ENCODE measurements at regions of chr2 and their contacts with region 1.

Region 1: DNA sequence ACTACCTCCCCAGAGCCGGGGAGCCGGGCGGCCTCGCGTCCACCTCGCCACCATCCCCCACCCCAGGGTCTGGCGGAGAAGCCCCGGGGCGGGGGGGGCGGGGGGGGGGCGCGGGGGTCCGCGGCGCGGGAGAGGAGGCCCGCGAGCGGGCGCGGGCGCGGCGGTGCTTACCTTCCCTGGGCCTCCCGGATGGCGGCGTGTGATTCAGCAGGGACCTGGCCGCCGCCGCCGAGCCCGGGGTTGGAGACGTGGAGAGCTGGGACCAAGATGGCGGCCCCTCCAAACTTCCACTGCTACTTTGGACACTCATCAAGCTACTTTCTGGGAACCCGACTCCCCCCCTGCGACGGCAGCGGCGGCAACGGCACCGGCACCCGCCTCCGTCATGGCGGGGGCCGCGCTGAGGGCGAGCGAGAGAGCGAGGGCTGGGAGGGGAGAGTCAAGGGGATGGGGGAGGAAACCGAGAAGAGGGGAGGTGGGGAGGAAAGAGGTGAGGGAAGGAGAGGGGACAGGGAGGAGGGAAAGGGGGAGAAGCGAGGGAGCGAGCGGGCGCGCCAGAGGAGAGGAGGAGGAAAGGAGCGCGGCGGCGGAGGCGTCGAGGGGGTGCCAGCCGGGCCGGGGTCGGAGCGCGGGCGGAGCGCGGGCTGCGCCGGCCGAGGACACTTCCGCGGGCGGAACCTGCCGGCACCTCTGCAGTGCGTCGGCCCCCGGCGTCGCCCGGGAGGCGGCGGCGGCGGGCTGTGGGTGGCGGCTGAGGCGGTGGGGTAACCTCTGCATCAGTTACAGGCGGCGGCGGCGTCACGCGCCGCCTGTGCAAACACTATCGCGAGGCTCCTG is at the start of gene TLK1:
- DNase-seq: peak; percentile 81
- H3K4me3 Mint-ChIP-seq: peak within 1 kb of the TSS; percentile 92
- H3K27ac Mint-ChIP-seq: peak within 1 kb of the TSS; percentile 88
- H3K4me1 Mint-ChIP-seq: peaks cover 56% of the 10 kb centered on the region
- H3K27me3 Mint-ChIP-seq: no peaks in the 10 kb centered on the region
- total RNA-seq, gene TLK1: 59.2 to 64.5 TPM

Region 2: DNA sequence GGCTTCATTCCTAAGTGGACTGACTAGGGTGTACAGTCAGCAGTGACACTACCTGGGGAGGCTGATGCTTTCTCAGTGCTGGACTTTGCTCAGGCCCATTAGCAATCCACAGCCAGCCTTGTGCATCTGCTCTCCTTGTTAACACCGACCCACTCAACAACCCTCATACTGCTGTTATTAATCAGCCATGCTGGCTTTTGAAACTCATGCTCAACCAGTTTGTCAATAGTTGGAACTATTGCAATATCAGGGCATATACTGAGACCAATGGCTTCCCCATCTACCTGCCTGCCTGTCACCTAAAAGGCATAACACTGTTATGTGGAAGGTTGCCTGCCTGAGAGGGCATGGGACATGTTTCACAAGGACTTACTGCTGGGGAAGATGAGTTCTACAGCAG is 304.3 kb before region 1 on chr2:
- CTCF ChIA-PET with region 1: no interaction called
- POLR2A ChIA-PET with region 1: no interaction called
- intact Hi-C with region 1: no loop called
- DNase-seq: no peak
- H3K4me3 Mint-ChIP-seq: no peak overlapping the region
- H3K27ac Mint-ChIP-seq: no peak overlapping the region
- H3K4me1 Mint-ChIP-seq: no peaks in the 10 kb centered on the region
- H3K27me3 Mint-ChIP-seq: peaks cover 3% of the 10 kb centered on the region

Region 3: DNA sequence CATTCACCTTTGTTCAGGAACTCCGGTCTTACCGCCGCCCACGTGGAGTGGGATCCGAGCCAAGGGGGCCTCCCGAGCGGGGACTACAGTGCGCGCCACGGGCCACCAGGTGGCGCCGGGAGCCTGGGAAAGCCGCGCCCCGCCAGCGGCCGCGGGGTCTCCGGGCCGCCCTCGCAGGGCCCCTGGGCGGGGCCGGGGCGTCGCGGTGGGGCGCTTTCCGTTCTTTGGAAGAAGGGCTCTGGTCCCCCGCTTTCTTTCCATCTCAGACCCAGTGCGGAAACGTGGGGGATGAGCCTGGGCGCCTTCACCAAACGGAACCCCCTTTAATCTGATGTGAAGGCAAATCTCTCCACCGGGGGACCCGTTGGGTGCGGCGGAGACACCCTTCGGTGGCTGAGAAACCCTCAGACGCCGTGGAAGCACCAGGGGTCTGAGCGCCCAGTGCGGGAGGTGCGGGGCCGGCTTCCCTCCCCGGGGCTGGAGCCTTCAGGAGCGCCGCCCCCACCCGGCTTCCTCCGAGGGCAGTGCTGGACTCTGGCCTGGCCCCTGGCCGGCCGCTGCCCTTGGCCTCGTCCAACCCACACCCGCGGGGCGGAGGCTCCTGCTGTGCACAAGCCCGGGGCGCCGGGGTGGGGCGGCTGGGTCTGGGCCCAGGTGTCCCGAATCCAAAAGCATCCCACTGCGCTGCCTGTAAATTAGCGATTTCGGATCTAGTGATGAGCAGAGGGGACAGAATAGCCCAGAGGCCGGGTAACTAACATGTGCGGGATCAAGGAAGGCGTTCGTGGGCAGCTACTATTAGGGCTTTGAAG is 186.6 kb before region 1 on chr2:
- CTCF ChIA-PET with region 1: interaction called, 23 read pairs
- POLR2A ChIA-PET with region 1: no interaction called
- intact Hi-C with region 1: loop called (anchors 1 kb)
- DNase-seq: peak; percentile 91
- H3K4me3 Mint-ChIP-seq: peak overlapping the region; percentile 72
- H3K27ac Mint-ChIP-seq: peak overlapping the region; percentile 42
- H3K4me1 Mint-ChIP-seq: peaks cover 14% of the 10 kb centered on the region
- H3K27me3 Mint-ChIP-seq: no peaks in the 10 kb centered on the region

Region 4: GRCh38 chr2:171095014-171095582 is 65.2 kb before region 1 on chr2:
- CTCF ChIA-PET with region 1: interaction called, 4 read pairs
- POLR2A ChIA-PET with region 1: no interaction called
- intact Hi-C with region 1: loop called (anchors 2 kb)
- DNase-seq: no peak
- H3K4me3 Mint-ChIP-seq: no peak overlapping the region
- H3K27ac Mint-ChIP-seq: peak overlapping the region; percentile 24
- H3K4me1 Mint-ChIP-seq: peaks cover 37% of the 10 kb centered on the region
- H3K27me3 Mint-ChIP-seq: no peaks in the 10 kb centered on the region

Region 5: DNA sequence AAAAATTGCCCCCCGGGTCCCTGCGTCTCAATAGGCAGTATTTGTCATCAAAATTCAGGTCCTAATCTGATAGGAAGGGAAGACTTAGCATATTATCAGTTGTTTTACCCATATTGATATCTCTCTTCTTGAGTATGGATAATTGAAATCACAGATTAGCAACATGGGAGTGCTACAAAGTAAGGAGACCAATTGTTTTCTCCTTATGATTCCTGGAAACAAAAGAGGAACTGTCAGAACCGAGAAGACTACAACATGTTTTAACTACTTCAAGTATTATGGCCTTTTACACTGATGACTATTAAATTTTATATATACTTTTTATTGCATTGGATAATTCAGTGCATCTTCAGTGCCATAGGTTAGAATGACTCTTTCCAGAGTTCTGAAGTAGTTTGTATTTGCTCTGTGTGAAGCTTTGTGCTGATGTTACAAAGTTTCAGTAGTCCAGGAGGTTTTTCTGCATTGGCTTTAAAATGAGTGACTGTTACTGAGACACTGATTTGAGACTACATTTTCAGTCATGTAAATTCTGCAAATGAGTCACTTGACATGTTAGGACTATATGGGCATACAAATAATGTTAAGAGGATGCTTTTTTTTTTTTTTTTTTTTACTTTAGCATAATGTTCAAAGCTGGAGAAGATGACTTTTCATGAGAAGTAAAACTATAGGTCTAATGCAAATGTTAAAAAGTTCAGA is 20.0 kb after region 1 on chr2:
- CTCF ChIA-PET with region 1: no interaction called
- POLR2A ChIA-PET with region 1: no interaction called
- intact Hi-C with region 1: no loop called
- DNase-seq: no peak
- H3K4me3 Mint-ChIP-seq: no peak overlapping the region
- H3K27ac Mint-ChIP-seq: peak overlapping the region; percentile 19
- H3K4me1 Mint-ChIP-seq: peaks cover 14% of the 10 kb centered on the region
- H3K27me3 Mint-ChIP-seq: no peaks in the 10 kb centered on the region

Region 6: GRCh38 chr2:171210864-171211431 is 50.6 kb after region 1 on chr2:
- CTCF ChIA-PET with region 1: no interaction called
- POLR2A ChIA-PET with region 1: no interaction called
- intact Hi-C with region 1: loop called (anchors 5 kb)
- DNase-seq: peak; percentile 53
- H3K4me3 Mint-ChIP-seq: peak overlapping the region; percentile 38
- H3K27ac Mint-ChIP-seq: peak overlapping the region; percentile 55
- H3K4me1 Mint-ChIP-seq: peaks cover 19% of the 10 kb centered on the region
- H3K27me3 Mint-ChIP-seq: no peaks in the 10 kb centered on the region

Region 7: DNA sequence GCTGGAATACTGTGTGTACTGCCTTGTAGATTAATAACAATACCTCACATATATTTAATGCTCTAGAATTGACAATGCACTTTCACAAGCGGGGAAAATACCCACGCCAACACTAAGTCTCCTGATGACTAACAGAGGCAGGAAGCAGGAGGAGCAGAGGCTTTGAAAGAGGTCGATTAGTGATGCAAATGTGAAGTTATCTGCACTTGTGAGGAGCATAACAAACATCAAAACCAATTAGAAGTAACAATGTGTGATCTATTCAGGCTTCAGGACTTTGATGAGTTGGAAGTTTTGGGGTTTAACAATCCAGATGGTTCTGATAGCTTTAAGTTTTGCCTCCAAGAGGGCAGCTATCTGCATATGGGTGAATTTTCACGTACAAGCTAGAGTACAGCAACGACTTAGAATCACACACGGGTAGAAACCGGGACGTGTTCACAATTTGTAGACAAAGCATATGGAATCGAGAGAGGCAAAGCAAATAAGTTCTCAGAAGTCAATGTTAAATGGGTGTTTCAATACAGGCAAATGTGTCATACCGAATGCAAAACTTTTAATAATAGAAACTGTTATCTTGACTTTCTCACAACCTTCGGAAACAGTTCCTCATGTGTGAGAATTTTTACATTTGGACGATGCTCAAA is 158.9 kb after region 1 on chr2:
- CTCF ChIA-PET with region 1: interaction called, 4 read pairs
- POLR2A ChIA-PET with region 1: interaction called, 5 read pairs
- intact Hi-C with region 1: loop called (anchors 1 kb)
- DNase-seq: peak; percentile 78
- H3K4me3 Mint-ChIP-seq: peak overlapping the region; percentile 69
- H3K27ac Mint-ChIP-seq: peak overlapping the region; percentile 99
- H3K4me1 Mint-ChIP-seq: peaks cover 61% of the 10 kb centered on the region
- H3K27me3 Mint-ChIP-seq: no peaks in the 10 kb centered on the region

Region 8: GRCh38 chr2:171433763-171434670 is 273.7 kb after region 1 on chr2 and contains the starts of genes DCAF17 and METTL8:
- CTCF ChIA-PET with region 1: interaction called, 3 read pairs
- POLR2A ChIA-PET with region 1: interaction called, 4 read pairs
- intact Hi-C with region 1: loop called (anchors 1 kb)
- DNase-seq: peak; percentile 96
- H3K4me3 Mint-ChIP-seq: peak within 1 kb of the TSS; percentile 92
- H3K27ac Mint-ChIP-seq: peak within 1 kb of the TSS; percentile 92
- H3K4me1 Mint-ChIP-seq: peaks cover 57% of the 10 kb centered on the region
- H3K27me3 Mint-ChIP-seq: no peaks in the 10 kb centered on the region
- total RNA-seq, gene DCAF17: 14.1 to 14.7 TPM
- total RNA-seq, gene METTL8: 33.3 to 40.9 TPM

Region 9: GRCh38 chr2:171670655-171671054 is 510.3 kb after region 1 on chr2:
- CTCF ChIA-PET with region 1: no interaction called
- POLR2A ChIA-PET with region 1: no interaction called
- intact Hi-C with region 1: no loop called
- DNase-seq: no peak
- H3K4me3 Mint-ChIP-seq: no peak overlapping the region
- H3K27ac Mint-ChIP-seq: no peak overlapping the region
- H3K4me1 Mint-ChIP-seq: no peaks in the 10 kb centered on the region
- H3K27me3 Mint-ChIP-seq: peaks cover 3% of the 10 kb centered on the region

Region 10: DNA sequence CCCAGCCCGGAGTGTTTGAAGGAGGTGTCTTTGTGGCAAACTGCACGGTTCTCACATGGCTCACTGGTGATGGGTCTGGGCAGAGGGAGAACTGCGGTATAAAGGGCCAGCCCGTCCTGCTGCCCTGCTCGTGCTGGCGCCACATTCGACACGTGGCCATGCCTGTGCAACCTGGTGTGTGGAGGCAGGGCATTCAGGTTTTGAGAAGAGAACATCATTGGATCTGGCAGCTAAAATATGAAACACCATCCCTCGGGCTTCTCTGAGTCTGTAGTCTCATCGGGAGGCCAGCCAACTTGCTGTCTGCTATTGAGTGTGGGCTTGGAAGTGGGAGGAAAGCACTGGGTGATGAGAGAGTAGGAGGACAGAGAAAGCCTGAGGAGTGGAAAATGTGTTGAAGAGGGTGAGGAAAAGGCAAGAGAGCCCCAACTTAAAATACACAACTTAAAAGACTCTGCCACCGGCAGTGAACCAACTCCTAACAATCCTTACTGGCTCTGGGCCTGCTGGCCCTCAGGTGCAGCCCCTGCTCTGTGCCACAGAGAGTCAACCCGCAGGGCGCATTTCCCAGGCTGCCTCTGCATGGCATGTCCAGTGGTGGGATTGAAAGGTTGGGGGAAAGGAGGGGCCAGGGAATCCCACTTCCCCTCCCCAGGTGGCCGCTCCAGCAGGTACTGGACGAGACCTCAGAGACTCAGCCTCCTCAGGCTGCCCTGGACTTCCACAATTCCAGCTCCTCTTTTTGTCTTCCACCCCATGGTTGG is 1055.0 kb after region 1 on chr2:
- CTCF ChIA-PET with region 1: no interaction called
- POLR2A ChIA-PET with region 1: no interaction called
- intact Hi-C with region 1: no loop called
- DNase-seq: no peak
- H3K4me3 Mint-ChIP-seq: no peak overlapping the region
- H3K27ac Mint-ChIP-seq: no peak overlapping the region
- H3K4me1 Mint-ChIP-seq: peaks cover 21% of the 10 kb centered on the region
- H3K27me3 Mint-ChIP-seq: no peaks in the 10 kb centered on the region

Measured in activated CD4-positive, alpha-beta memory T cell treated with anti-CD3 and anti-CD28 coated beads for 36 hours (primary cell).